Activated CD4-positive, alpha-beta T cell treated with anti-CD3 and anti-CD28 coated beads, Interleukin-2, amount 10 ng/mL, durations not matched to agents 7 days and 5 days (primary cell): ENCODE measurements at regions of chr17 and their contacts with region 1.

Region 1: DNA sequence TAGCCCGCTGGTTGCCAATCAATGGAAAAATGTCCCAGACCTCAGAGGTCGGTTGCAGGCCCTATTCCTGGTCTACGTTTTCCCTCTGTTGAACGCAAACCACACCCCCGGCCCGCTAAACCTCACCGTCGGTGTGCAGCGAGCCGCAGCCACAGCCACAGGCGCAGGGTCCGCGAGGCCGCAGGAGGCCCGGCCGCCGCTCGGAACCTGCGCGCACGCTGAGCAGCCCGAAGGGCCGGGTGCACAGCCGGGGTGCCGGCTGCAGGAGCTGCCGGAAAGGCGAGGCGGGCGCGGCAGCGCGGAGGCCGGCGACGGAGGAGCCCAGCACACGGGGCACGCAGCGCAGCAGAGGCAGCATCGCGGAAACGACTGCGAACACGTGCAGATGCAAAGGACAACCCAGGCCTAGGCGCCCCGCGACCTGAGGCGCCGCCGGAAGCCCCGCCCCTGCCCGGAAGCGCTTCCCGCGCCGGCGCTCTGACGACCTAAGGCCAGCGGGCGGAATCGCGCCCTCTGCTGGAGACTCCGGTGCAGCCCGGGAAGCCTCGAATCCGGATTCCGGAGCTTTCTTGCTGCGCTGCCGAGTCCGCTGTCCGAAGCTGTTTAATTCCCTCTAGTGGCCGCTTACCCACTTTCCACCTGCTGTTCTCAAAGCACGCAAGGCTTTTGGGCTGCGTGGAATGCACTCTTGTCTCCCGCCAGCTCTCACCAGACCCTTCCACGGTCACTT is at the start of gene C1QBP:
- DNase-seq: peak; percentile 91
- H3K4me3 Mint-ChIP-seq: peak within 1 kb of the TSS; percentile 82
- H3K27ac Mint-ChIP-seq: peak within 1 kb of the TSS; percentile 92
- H3K4me1 Mint-ChIP-seq: peaks cover 44% of the 10 kb centered on the region
- H3K27me3 Mint-ChIP-seq: no peaks in the 10 kb centered on the region
- total RNA-seq, gene C1QBP: 156 to 157 TPM

Region 2: DNA sequence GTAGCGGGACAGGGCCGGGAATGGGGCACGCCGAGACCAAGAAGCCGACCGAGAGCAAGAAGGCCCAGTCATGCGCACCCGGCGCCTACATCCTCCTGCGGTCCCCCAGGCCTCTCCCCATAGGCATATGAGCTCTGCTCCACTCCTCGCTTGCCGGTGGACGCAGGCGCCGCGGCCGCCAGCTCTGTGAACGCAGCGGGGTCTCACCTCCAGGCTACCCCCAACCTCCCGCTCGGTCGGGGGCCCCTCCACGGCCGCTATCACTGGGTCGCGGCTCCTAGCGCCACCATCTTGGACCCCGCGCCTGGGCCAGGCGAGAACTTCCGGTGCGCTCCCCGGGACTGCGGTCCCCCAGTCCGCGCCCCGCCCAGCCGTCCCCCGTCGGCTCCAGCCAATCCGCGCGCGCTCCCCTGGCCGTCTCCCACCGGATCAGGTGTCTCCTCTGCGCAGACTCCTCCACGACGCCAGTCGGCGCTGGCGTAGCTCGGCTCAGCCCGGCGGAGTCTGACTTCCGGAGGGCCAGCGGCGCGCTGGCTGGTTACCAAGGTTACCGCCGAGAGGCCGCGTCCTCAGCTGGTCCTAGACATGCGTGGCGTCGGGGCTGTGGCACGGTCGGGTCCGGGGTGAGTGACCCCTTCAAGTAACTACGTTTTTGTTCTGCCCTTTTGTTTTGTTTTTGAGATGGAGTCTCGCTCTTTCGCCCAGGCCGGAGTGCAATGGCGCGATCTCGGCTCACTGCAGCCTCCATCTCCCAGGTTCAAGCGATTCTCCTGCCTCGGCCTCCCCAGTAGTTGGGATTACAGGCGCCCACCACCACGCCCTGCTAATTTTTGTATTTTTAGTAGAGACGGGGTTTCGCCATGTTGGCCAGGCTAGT is 247.1 kb before region 1 on chr17 and contains the start of gene ZNF594:
- CTCF ChIA-PET with region 1: interaction called, 11 read pairs
- POLR2A ChIA-PET with region 1: no interaction called
- DNase-seq: peak; percentile 97
- H3K4me3 Mint-ChIP-seq: peak within 1 kb of the TSS; percentile 84
- H3K27ac Mint-ChIP-seq: peak within 1 kb of the TSS; percentile 91
- H3K4me1 Mint-ChIP-seq: peaks cover 32% of the 10 kb centered on the region
- H3K27me3 Mint-ChIP-seq: no peaks in the 10 kb centered on the region
- total RNA-seq, gene ZNF594: 11.3 to 11.6 TPM

Region 3: DNA sequence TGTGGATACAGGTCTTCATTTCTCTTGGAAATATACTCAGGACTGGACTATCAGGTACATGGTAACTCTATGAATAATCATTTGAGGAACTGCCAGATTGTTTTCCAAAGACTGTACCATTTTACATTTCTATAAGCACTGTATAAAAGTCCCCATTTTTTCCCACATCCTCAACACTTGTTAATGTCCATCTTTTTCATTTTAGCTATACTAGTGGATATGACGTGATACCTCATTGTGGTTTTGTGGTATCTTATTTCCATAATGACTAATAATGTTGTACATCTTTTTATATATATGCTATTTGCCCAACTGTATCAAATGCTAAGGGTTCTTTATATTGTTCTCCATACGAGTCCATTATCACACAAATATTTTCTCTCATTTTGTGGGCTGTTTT is 42.3 kb before region 1 on chr17:
- CTCF ChIA-PET with region 1: no interaction called
- POLR2A ChIA-PET with region 1: no interaction called
- DNase-seq: no peak
- H3K4me3 Mint-ChIP-seq: no peak overlapping the region
- H3K27ac Mint-ChIP-seq: no peak overlapping the region
- H3K4me1 Mint-ChIP-seq: no peaks in the 10 kb centered on the region
- H3K27me3 Mint-ChIP-seq: no peaks in the 10 kb centered on the region

Region 4: GRCh38 chr17:5419356-5419958 is 19.4 kb before region 1 on chr17 and contains the start of gene NUP88:
- CTCF ChIA-PET with region 1: interaction called, 11 read pairs
- POLR2A ChIA-PET with region 1: interaction called, 3 read pairs
- DNase-seq: peak; percentile 98
- H3K4me3 Mint-ChIP-seq: peak within 1 kb of the TSS; percentile 98
- H3K27ac Mint-ChIP-seq: peak within 1 kb of the TSS; percentile 99
- H3K4me1 Mint-ChIP-seq: peaks cover 43% of the 10 kb centered on the region
- H3K27me3 Mint-ChIP-seq: no peaks in the 10 kb centered on the region
- total RNA-seq, gene NUP88: 83.4 to 109 TPM

Region 5: DNA sequence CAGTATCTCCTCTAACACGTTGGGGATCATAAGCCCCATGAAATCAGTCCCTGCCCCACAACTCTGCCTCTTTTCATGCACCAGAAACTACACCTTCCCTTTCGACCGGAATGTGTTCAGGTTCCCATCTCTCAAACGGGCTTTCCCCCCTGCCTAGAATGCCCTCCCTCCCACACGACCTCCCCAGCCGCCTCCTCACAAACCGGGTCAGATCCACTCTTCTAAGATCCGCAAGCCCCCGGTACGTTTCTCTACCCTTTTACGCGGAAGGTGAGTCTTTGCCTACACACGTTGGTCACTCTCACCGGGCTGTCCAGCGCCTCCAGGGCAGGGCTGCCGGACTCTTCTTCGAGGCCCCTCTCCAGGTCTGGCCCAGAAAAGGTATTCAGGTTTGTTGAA is 29.2 kb after region 1 on chr17:
- CTCF ChIA-PET with region 1: interaction called, 27 read pairs
- POLR2A ChIA-PET with region 1: no interaction called
- DNase-seq: peak; percentile 19
- H3K4me3 Mint-ChIP-seq: peak overlapping the region; percentile 81
- H3K27ac Mint-ChIP-seq: peak overlapping the region; percentile 76
- H3K4me1 Mint-ChIP-seq: peaks cover 42% of the 10 kb centered on the region
- H3K27me3 Mint-ChIP-seq: no peaks in the 10 kb centered on the region

Region 6: DNA sequence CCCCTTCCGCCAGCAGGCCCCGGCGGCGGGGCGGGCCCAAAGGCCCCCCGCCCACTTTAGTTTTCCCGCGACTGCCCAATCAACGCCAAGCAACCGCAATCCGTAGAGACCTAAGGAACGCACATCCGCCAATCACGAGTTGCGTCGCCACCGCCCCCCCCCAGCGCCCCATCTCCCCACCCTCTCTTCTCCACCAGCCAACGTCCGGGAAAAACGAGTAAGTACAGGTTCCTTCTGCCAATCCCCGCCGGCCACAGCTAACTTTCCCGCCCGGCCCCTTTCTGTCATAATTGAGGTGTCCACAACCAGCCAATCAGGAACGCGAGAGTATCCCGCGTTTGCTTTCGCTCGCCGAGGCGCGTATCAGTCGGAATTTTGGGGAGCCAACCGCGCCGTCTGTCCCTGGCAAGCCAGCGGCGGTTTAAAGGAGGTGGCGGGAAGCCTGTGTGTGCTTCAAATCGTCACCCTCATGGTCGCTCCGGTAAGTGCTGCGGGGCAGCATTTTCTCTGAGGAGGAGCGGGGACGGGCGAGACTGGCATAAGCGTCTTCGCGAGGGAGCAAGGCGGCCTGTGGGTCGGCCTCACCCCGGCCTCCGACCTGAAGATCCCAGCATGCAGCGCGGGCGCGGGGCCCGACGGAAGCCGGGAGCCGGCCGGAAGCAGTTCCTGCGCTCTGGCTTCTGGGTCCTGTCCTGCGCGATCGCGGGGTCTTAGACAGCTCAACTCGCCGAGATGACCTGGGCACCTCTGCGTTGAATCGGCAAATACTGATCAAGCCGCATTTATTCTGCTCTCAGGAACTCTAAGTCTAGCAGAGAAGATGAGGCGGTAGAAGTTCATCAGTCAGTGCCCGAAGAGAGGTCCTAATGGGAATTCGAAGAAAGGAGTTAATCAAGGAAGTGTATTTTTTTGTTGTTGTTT is 47.6 kb after region 1 on chr17 and contains the start of gene MIS12:
- CTCF ChIA-PET with region 1: interaction called, 13 read pairs
- POLR2A ChIA-PET with region 1: interaction called, 3 read pairs
- DNase-seq: peak; percentile 99
- H3K4me3 Mint-ChIP-seq: peak within 1 kb of the TSS; percentile 88
- H3K27ac Mint-ChIP-seq: peak within 1 kb of the TSS; percentile 99
- H3K4me1 Mint-ChIP-seq: peaks cover 45% of the 10 kb centered on the region
- H3K27me3 Mint-ChIP-seq: no peaks in the 10 kb centered on the region
- total RNA-seq, gene MIS12: 33.1 to 39.8 TPM

Region 7: GRCh38 chr17:5508810-5509209 is 69.9 kb after region 1 on chr17:
- CTCF ChIA-PET with region 1: no interaction called
- POLR2A ChIA-PET with region 1: no interaction called
- DNase-seq: no peak
- H3K4me3 Mint-ChIP-seq: no peak overlapping the region
- H3K27ac Mint-ChIP-seq: no peak overlapping the region
- H3K4me1 Mint-ChIP-seq: peaks cover 22% of the 10 kb centered on the region
- H3K27me3 Mint-ChIP-seq: no peaks in the 10 kb centered on the region